Panc1 (cell line): ENCODE measurements at regions of chr2 and their contacts with region 1.

Region 1: GRCh38 chr2:74703373-74703772 is 49.3 kb downstream of the SEMA4F start:
- DNase-seq: no peak
- ATAC-seq: no peak
- H3K4me3 ChIP-seq: no peak overlapping the region
- H3K27ac ChIP-seq: no peak overlapping the region
- H3K4me1 ChIP-seq: no peaks in the 10 kb centered on the region
- H3K27me3 ChIP-seq: peaks cover 5% of the 10 kb centered on the region
- CTCF ChIP-seq: no peak

Region 2: GRCh38 chr2:75614056-75614710 is 910.8 kb after region 1 on chr2:
- CTCF ChIA-PET with region 1: no interaction called
- POLR2A ChIA-PET with region 1: no interaction called
- in situ Hi-C with region 1: no loop called
- intact Hi-C with region 1: loop called (anchors 5 kb)
- DNase-seq: no peak
- ATAC-seq: no peak
- H3K4me3 ChIP-seq: no peak overlapping the region
- H3K27ac ChIP-seq: no peak overlapping the region
- H3K4me1 ChIP-seq: no peaks in the 10 kb centered on the region
- H3K27me3 ChIP-seq: peaks cover 6% of the 10 kb centered on the region
- CTCF ChIP-seq: no peak